GM12878 (cell line): ENCODE measurements at regions of chr3 and their contacts with region 1.

Region 1: DNA sequence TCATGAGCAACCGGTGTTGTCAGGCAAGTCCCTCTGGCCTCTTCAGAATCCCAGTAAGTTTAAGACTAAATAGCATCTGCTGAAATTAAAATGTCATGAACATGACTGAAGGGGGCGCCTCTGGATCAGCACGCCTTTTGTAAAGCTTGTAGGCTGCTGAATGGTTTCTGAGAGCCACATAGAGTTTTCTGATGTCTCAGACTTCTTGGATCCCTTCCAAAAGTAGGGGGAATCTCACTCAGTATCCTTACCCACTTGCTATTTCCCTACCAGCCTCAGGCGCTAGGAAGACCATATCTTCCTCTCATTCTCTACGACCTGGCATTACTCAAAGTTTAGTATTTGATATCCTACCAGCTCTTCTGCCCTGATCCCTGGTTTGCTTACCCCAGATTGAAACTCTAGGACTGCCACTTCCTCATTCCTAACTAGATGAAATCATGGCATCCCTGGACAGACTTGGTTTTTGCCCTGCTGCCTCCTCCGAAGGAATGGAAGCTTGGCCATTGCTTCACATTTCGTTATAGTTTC is 62.7 kb upstream of the CD47 start:
- DNase-seq: no peak
- ATAC-seq: peak; percentile 91
- H3K4me3 ChIP-seq: no peak overlapping the region
- H3K27ac ChIP-seq: no peak overlapping the region
- H3K4me1 ChIP-seq: no peaks in the 10 kb centered on the region
- H3K27me3 ChIP-seq: no peaks in the 10 kb centered on the region
- CTCF ChIP-seq: peak; percentile 45 to 68 (median 59); a peak in 5 of 6 replicates
- EP300 ChIP-seq: no peak
- POLR2A ChIP-seq: no peak
- RAD21 ChIP-seq: peak; percentile 92

Region 2: GRCh38 chr3:107938143-107938542 is 215.4 kb before region 1 on chr3:
- CTCF ChIA-PET with region 1: interaction called, 10 read pairs
- POLR2A ChIA-PET with region 1: no interaction called
- RAD21 ChIA-PET with region 1: no interaction called
- SMC1A ChIA-PET with region 1: no interaction called
- in situ Hi-C with region 1: no loop called
- intact Hi-C with region 1: no loop called
- DNase-seq: no peak
- ATAC-seq: no peak
- H3K4me3 ChIP-seq: no peak overlapping the region
- H3K27ac ChIP-seq: no peak overlapping the region
- H3K4me1 ChIP-seq: no peaks in the 10 kb centered on the region
- H3K27me3 ChIP-seq: no peaks in the 10 kb centered on the region; a peak in 1 of 4 replicates
- CTCF ChIP-seq: peak; percentile 19 to 47 (median 25); a peak in 4 of 6 replicates
- EP300 ChIP-seq: no peak
- POLR2A ChIP-seq: no peak
- RAD21 ChIP-seq: peak; percentile 62

Region 3: DNA sequence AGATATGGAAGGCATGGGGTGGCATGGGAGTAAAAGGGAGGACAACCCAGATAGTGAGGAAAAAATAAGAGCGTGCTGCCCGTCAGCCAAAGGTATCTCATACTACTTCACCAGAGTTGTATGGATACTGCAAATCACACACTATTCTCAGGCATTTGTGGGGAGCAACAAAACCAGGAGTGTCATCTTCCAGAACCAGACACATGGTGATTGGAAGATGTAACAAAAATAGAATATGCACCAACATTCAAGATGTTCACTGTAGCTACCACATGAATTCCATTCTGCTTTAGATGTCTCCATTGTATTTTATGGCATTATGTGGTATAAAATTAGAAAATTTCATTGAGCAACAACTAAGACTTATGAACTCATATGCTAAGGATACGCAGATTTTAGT is 97.6 kb before region 1 on chr3:
- CTCF ChIA-PET with region 1: no interaction called
- POLR2A ChIA-PET with region 1: no interaction called
- RAD21 ChIA-PET with region 1: no interaction called
- SMC1A ChIA-PET with region 1: no interaction called
- in situ Hi-C with region 1: no loop called
- intact Hi-C with region 1: no loop called
- DNase-seq: no peak
- ATAC-seq: no peak
- H3K4me3 ChIP-seq: no peak overlapping the region
- H3K27ac ChIP-seq: no peak overlapping the region
- H3K4me1 ChIP-seq: peaks cover 4% of the 10 kb centered on the region
- H3K27me3 ChIP-seq: no peaks in the 10 kb centered on the region
- CTCF ChIP-seq: no peak
- EP300 ChIP-seq: no peak
- POLR2A ChIP-seq: no peak
- RAD21 ChIP-seq: no peak

Region 4: GRCh38 chr3:108292905-108293328 is 139.4 kb after region 1 on chr3:
- CTCF ChIA-PET with region 1: no interaction called
- POLR2A ChIA-PET with region 1: no interaction called
- RAD21 ChIA-PET with region 1: no interaction called
- SMC1A ChIA-PET with region 1: interaction called, 5 read pairs
- in situ Hi-C with region 1: no loop called
- intact Hi-C with region 1: loop called (anchors 10 kb)
- DNase-seq: peak; percentile 69
- ATAC-seq: peak; percentile 90
- H3K4me3 ChIP-seq: peak overlapping the region; percentile 2; the same call in 1 of the 2 replicates
- H3K27ac ChIP-seq: peak overlapping the region; percentile 48
- H3K4me1 ChIP-seq: peaks cover 30% of the 10 kb centered on the region
- H3K27me3 ChIP-seq: no peaks in the 10 kb centered on the region
- CTCF ChIP-seq: no peak
- EP300 ChIP-seq: peak; percentile 26 to 44; a peak in 1 of 4 replicates
- POLR2A ChIP-seq: no peak
- RAD21 ChIP-seq: no peak

Region 5: DNA sequence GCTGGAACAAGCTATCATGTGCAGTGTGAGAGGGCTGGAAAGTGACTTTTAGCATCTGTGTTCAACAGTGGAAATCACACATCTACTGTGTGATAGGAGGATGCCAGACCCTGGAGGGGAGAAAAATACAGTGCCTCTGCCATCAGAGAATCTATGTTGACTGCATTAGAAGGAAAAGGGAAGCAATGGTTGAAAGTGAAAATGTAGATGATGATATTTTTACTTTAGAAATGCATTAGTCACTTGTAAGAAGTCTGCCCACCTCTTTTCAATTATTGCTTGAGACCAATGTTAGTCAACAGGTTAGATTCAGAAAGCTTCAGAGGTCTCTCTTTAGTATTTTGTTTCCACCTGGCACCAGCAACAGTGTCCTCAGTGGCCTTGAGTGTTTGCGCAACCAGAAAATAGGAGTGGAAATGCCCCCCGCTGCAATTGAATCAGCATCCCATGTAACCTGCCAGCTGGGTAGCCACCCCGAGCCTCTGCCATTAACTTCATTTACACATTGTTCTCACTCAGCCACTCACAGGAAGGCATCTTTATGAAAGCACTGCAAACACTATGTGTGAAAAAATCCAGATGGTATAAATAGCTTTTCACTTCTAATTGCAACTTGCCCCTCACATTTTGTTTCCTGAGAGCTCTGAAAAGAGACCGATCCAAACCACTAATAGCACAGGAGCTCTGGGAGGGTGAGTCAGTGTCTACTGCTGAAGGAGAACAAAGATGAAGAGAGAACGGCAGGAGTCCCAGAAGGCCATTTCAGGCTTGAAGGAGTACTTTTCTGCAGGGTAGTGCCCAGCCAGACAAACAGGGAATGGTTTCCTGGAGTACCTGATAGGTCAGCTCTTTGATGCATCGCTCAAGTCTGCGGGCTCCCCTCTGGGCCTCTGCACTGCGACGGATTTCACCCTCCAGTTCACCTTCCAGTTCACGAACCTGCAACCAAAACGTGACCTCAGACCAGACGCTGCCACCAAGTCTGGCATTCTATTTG is 234.9 kb after region 1 on chr3:
- CTCF ChIA-PET with region 1: interaction called, 4 read pairs
- POLR2A ChIA-PET with region 1: no interaction called
- RAD21 ChIA-PET with region 1: no interaction called
- SMC1A ChIA-PET with region 1: interaction called, 11 read pairs
- in situ Hi-C with region 1: no loop called
- intact Hi-C with region 1: no loop called
- DNase-seq: peak; percentile 70
- ATAC-seq: peak; percentile 84
- H3K4me3 ChIP-seq: peak overlapping the region; percentile 42
- H3K27ac ChIP-seq: peak overlapping the region; percentile 33; the same call in 1 of the 2 replicates
- H3K4me1 ChIP-seq: peaks cover 33% of the 10 kb centered on the region
- H3K27me3 ChIP-seq: no peaks in the 10 kb centered on the region
- CTCF ChIP-seq: no peak
- EP300 ChIP-seq: peak; percentile 38 to 48; a peak in 1 of 4 replicates
- POLR2A ChIP-seq: no peak
- RAD21 ChIP-seq: no peak

Region 6: DNA sequence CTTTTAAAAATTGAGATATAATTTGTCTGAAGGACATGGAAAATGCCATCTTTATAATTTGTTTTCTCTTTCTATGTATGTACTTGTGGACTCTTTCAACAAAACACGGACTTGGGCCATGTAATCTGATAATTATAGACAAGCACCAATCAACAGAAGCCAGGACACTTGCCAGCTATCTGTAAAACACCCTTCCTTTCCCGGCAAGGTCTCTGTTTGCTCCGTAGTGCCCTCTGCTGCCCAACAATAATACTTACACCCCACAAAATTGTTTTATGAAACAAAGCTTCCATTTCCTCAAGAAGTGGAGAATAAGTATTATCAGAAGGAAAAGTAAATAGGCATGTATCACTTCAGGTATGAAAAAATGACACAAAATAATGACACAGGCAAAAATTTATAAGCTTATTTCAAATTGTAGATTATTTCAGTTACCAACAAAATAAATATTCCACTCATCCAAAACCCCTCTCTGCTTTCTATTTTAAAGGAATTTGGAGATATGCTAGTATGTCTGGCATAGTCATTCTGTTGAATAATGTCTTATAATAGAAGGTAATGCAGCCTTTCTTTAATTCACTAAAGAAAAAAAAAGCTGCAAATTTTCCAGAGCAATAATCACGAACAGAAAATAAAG is 324.1 kb after region 1 on chr3:
- CTCF ChIA-PET with region 1: interaction called, 39 read pairs
- POLR2A ChIA-PET with region 1: no interaction called
- RAD21 ChIA-PET with region 1: interaction called, 14 read pairs
- SMC1A ChIA-PET with region 1: interaction called, 27 read pairs
- in situ Hi-C with region 1: loop called (anchors 5 kb)
- intact Hi-C with region 1: loop called (anchors 1 kb)
- DNase-seq: peak; percentile 12
- ATAC-seq: peak; percentile 89
- H3K4me3 ChIP-seq: no peak overlapping the region
- H3K27ac ChIP-seq: no peak overlapping the region
- H3K4me1 ChIP-seq: no peaks in the 10 kb centered on the region
- H3K27me3 ChIP-seq: no peaks in the 10 kb centered on the region
- CTCF ChIP-seq: peak; percentile 66 to 70 (median 69)
- EP300 ChIP-seq: no peak
- POLR2A ChIP-seq: no peak
- RAD21 ChIP-seq: peak; percentile 86